ENCODE measurements at regions of chr9 and their contacts with region 1.

Region 1: GRCh38 chr9:129139993-129140396 is 28.8 kb downstream of the PTPA start:
- DNase-seq: peak; percentile 96
- H3K4me3 ChIP-seq: peak overlapping the region; percentile 52
- H3K27me3 ChIP-seq: no peaks in the 10 kb centered on the region
- CTCF ChIP-seq: no peak

Region 2: GRCh38 chr9:129093421-129094204 is 46.4 kb before region 1 on chr9:
- CTCF ChIA-PET with region 1: no interaction called
- POLR2A ChIA-PET with region 1: no interaction called
- DNase-seq: no peak
- H3K4me3 ChIP-seq: no peak overlapping the region
- H3K27me3 ChIP-seq: no peaks in the 10 kb centered on the region
- CTCF ChIP-seq: no peak

Region 3: GRCh38 chr9:129164246-129164930 is 24.4 kb after region 1 on chr9:
- CTCF ChIA-PET with region 1: interaction called, 335 read pairs
- POLR2A ChIA-PET with region 1: no interaction called
- DNase-seq: no peak
- H3K4me3 ChIP-seq: no peak overlapping the region
- H3K27me3 ChIP-seq: no peaks in the 10 kb centered on the region
- CTCF ChIP-seq: no peak

Region 4: GRCh38 chr9:129482521-129483414 is 342.8 kb after region 1 on chr9:
- CTCF ChIA-PET with region 1: interaction called, 11 read pairs
- POLR2A ChIA-PET with region 1: interaction called, 5 read pairs
- DNase-seq: peak; percentile 48
- H3K4me3 ChIP-seq: peak overlapping the region; percentile 20; the same call in 1 of the 2 replicates
- H3K27me3 ChIP-seq: no peaks in the 10 kb centered on the region
- CTCF ChIP-seq: peak; percentile 19; the same call in 1 of the 2 replicates

Region 5: GRCh38 chr9:129569502-129570449 is 429.8 kb after region 1 on chr9:
- CTCF ChIA-PET with region 1: interaction called, 10 read pairs
- POLR2A ChIA-PET with region 1: no interaction called
- DNase-seq: no peak
- H3K4me3 ChIP-seq: no peak overlapping the region
- H3K27me3 ChIP-seq: no peaks in the 10 kb centered on the region
- CTCF ChIP-seq: peak; percentile 47

Region 6: GRCh38 chr9:129617167-129617566 is 477.2 kb after region 1 on chr9:
- CTCF ChIA-PET with region 1: interaction called, 258 read pairs
- POLR2A ChIA-PET with region 1: no interaction called
- DNase-seq: no peak
- H3K4me3 ChIP-seq: no peak overlapping the region
- H3K27me3 ChIP-seq: no peaks in the 10 kb centered on the region
- CTCF ChIP-seq: peak; percentile 79

Region 7: DNA sequence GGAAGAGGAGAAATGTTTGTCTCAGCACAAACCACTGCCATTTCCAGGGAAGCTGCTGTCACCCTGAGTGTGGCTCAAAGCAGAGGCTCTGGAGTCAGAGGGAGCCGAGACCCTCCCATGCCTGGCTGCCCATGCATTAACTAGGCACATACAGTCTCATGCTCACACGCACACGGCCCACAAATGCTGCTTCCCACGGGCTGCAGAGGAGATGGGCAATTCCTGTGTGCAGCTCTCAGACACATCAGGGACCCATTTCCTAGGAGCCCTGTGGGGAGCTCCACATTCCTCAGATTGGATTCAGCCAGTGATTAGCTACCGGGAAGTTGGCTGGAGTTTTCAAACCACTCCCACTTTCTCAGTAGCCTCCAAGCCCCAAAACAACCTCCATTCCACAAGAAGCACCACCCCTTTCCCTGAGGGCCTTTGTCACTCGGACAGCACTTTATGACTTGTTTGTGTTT is 621.9 kb after region 1 on chr9:
- CTCF ChIA-PET with region 1: no interaction called
- POLR2A ChIA-PET with region 1: interaction called, 11 read pairs
- DNase-seq: peak; percentile 75
- H3K4me3 ChIP-seq: no peak overlapping the region
- H3K27me3 ChIP-seq: no peaks in the 10 kb centered on the region
- CTCF ChIP-seq: no peak